Activated naive CD4-positive, alpha-beta T cell treated with anti-CD3 and anti-CD28 coated beads, Interleukin-2, amount 10 ng/mL, durations not matched to agents 7 days and 5 days (primary cell): ENCODE measurements at regions of chr2 and their contacts with region 1.

Region 1: GRCh38 chr2:215920244-215921100 is 92.9 kb downstream of the MREG start:
- DNase-seq: peak; percentile 75
- H3K4me3 Mint-ChIP-seq: no peak overlapping the region
- H3K27ac Mint-ChIP-seq: no peak overlapping the region
- H3K4me1 Mint-ChIP-seq: peaks cover 4% of the 10 kb centered on the region
- H3K27me3 Mint-ChIP-seq: peaks cover 10% of the 10 kb centered on the region

Region 2: GRCh38 chr2:215888680-215889079 is 31.8 kb before region 1 on chr2:
- CTCF ChIA-PET with region 1: no interaction called
- DNase-seq: no peak
- H3K4me3 Mint-ChIP-seq: no peak overlapping the region
- H3K27ac Mint-ChIP-seq: no peak overlapping the region
- H3K4me1 Mint-ChIP-seq: no peaks in the 10 kb centered on the region
- H3K27me3 Mint-ChIP-seq: peaks cover 13% of the 10 kb centered on the region

Region 3: DNA sequence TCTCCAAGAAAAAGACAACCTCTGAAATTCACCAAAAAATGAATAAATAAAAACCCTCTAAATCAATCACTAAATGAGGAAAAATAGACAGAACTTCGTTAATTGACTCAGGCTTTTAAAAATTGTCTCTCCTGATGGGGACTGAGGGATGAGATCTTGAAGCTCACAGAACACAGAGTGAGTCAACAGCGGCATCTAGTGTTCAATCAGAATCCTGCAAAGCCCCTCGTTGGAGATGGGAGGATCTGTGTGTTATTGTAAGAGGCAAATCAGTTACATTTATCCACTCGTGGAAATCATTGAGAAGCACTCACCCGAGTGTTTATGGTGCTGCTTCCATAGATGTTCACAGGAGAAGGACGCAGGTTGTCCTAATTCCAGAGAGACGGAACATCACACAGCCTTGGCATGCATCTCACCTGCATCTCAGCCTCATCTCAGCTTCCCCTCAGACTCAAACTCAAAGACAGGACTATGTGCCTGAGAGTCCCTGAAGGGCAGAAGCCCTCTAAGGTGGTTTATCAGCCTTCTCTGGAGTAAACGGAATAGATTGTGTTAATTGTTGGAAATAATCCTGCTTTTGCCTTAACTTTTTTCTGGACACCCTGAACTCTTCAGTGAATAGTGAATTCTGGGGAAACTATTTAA is 10.9 kb after region 1 on chr2:
- CTCF ChIA-PET with region 1: interaction called, 30 read pairs
- DNase-seq: peak; percentile 70
- H3K4me3 Mint-ChIP-seq: no peak overlapping the region
- H3K27ac Mint-ChIP-seq: no peak overlapping the region
- H3K4me1 Mint-ChIP-seq: no peaks in the 10 kb centered on the region
- H3K27me3 Mint-ChIP-seq: peaks cover 22% of the 10 kb centered on the region